ENCODE measurements at regions of chr9 and their contacts with region 1.

Region 1: DNA sequence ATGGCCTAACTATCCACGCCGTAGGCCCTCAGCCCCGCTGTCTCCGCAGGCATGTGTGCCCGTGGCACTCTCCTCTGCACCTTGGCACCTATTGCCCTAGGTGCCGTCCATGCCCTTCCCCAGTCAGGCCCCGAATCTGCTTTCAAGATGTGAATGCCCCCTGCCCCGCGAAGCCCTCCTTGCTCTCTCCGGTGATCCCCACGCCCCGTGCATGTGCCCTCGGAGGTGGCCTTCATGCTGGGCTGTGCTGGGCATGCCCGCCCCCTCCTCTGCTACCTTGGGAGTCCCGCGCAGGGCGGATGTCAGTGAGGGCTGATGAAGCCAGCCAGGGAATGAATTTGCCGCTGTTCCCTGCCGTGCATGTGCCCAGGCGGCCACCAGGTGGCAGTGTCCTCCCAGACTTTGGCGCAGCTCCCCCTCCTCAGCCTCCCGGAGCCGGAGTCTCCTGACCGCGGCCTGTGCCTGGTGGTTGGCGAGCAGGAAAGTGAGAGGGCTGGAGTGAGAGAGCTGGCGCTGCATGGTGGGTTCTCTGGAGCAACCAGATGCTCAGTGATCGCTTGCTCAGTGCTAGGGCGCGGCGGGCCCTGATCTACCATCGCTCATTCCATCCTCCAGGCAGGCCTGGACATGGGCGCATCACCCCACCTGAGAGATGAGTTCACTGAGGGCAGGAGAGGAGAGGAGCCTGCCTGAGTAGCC is 112.9 kb upstream of the LMX1B start:
- DNase-seq: no peak
- H3K4me3 ChIP-seq: no peak overlapping the region
- CTCF ChIP-seq: peak; percentile 99

Region 2: GRCh38 chr9:126482361-126483044 is 18.3 kb before region 1 on chr9:
- CTCF ChIA-PET with region 1: interaction called, 40 read pairs
- POLR2A ChIA-PET with region 1: no interaction called
- DNase-seq: no peak
- H3K4me3 ChIP-seq: no peak overlapping the region; the same call in 1 of the 2 replicates
- CTCF ChIP-seq: no peak

Region 3: DNA sequence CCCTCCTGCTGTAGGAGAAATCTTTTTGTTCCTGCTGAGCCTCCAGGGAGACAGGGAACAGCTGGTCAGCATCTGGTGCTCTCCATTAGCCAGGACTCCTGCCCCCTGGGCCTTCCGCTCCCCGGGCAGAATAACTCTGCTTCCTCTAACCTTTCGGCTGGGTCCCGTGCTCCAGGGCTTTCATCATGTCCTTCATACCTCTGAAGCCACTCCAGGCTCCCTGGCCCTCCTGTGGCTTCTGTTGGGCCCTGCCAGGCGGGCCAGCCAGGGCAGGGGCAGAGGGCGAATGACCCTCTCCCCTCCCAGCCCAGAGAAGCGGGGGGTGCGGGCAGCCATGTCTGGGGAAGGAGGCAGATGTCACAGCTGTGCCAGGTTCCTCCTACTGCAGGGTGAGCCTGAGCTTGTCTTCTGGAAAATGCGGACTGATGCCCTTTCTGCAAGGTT is 31.2 kb after region 1 on chr9:
- CTCF ChIA-PET with region 1: interaction called, 25 read pairs
- POLR2A ChIA-PET with region 1: no interaction called
- DNase-seq: no peak
- H3K4me3 ChIP-seq: no peak overlapping the region
- CTCF ChIP-seq: no peak

Region 4: DNA sequence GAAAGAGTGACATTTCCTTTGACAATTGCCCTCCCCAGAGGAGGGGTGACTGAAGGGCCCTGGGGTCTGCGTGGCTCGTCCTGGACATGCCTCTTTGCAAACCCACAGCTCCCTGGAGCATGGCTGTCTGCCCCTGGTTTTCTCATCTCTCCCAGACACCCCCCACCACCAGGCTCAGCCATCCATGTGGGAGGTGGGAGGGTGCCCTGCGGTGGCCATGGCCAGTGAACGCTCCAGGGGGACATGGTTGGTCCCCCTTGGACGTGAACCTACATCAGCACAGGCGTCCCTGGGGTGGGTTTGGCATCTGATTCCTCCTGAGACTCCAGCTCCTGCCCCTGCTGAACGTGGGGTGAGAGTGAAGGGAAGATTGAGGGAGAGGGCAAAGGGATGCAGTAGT is 45.2 kb after region 1 on chr9:
- CTCF ChIA-PET with region 1: interaction called, 269 read pairs
- POLR2A ChIA-PET with region 1: no interaction called
- DNase-seq: no peak
- H3K4me3 ChIP-seq: no peak overlapping the region
- CTCF ChIP-seq: no peak

Region 5: GRCh38 chr9:126569036-126569435 is 68.2 kb after region 1 on chr9:
- CTCF ChIA-PET with region 1: interaction called, 61 read pairs
- POLR2A ChIA-PET with region 1: no interaction called
- DNase-seq: no peak
- H3K4me3 ChIP-seq: no peak overlapping the region
- CTCF ChIP-seq: no peak

Region 6: DNA sequence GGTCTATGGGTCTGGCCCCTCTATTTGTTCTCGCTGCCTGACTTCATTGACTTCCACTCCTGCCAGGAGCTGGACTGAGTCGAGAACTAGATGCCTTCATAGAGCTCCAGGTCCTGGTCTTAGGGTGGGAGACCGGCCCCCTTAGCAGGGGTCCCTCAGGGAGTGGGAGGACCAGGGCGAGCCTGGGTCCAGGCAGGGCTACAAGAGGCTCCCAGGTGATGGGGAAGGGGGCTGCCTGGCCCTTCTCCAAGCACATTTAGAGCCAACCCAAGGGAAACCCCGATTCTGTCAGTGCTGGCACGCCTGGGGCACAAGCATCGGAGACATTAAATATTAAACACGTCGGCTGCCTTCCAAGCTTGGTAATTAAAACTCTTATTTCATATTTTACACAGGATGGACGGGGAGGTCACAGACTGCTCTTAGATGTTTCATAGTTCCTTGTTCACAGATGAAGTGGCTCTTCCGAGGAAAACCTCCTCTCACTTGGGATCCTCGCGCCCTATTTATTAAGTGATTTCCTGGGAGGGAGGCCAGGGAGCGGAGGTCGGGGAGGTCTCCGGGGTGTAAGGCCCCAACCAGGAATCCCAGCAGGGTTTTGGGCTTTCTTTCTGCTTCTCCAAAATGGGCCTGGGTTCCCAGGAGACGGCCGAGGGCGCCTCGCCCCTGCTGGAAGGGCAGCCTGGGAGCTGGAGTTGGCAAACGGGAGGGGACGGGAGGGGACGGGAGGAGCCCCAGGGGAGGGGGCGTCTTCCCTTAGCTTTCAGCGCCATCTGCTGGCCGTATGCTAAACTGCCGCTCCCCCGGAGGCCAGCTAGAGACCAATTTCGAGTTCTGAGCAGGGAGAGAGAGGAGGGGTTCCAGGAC is 280.6 kb after region 1 on chr9:
- CTCF ChIA-PET with region 1: interaction called, 140 read pairs
- POLR2A ChIA-PET with region 1: no interaction called
- DNase-seq: no peak
- H3K4me3 ChIP-seq: peak overlapping the region; percentile 12
- CTCF ChIP-seq: peak; percentile 89